ENCODE measurements at regions of chr21 and their contacts with region 1.

Region 1: GRCh38 chr21:28884976-28885852 is 107.5 kb downstream of the LTN1 start:
- DNase-seq: peak; percentile 73 to 91 (median 84)
- H3K4me3 ChIP-seq: peak overlapping the region; percentile 42 to 94 (median 77)
- H3K27ac ChIP-seq: peak overlapping the region; percentile 5 to 97 (median 89)
- H3K27me3 ChIP-seq: no peaks in the 10 kb centered on the region
- CTCF ChIP-seq: peak in 17 of 56 donors; percentile 3 to 54 (median 20)

Region 2: GRCh38 chr21:28928578-28929420 is 43.6 kb after region 1 on chr21:
- intact Hi-C with region 1: no loop called
- DNase-seq: no peak
- H3K4me3 ChIP-seq: no peak overlapping the region
- H3K27ac ChIP-seq: peak overlapping the region in 31 of 59 donors; percentile 1 to 56 (median 30)
- H3K27me3 ChIP-seq: no peaks in the 10 kb centered on the region
- CTCF ChIP-seq: no peak

Region 3: DNA sequence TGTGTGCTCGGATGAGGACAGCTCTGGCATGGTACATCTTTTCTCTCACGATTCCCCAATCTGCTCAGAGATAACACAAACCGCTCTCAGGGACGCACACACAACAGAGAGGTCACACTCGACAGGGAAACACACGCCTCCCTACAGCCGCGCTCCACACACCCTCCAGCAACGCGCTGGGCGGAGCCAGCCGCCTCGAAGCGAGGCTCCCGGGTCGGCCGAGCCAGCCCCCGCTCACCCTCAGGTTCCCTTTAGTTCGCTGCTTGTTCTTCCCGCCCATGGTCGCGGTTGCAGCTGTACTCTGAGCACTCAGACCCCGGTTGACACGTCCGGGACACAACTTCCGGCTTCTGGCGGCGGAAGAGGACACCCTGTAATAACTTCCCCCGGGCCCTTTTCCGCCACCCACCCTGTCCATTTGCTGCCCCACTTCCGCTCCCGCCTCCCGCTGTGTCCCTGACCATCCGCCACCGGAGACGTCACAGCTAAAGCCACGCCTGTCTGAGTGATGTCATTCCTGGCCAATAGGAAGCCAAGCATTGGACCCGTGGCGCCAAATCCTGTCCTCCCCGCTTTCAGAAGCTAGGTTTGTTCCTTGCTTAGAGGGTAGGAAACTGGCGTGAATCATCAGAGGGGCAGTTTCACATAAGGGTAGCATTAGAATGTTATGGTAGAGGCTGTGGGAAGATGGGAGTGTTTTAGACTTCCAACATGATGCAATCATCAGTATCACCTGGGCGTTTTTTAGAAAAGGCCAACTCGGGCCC is 107.5 kb after region 1 on chr21 and contains the start of gene LTN1:
- intact Hi-C with region 1: loop called in 1 of 2 experiments (anchors 10 kb)
- DNase-seq: peak; percentile 97 to 99 (median 99)
- H3K4me3 ChIP-seq: peak within 1 kb of the TSS; percentile 61 to 100 (median 93)
- H3K27ac ChIP-seq: peak within 1 kb of the TSS in 58 of 59 donors; percentile 30 to 96 (median 87)
- H3K27me3 ChIP-seq: no peaks in the 10 kb centered on the region
- CTCF ChIP-seq: peak in 17 of 56 donors; percentile 5 to 44 (median 23)
- total RNA-seq, gene LTN1: 20.9 to 41.3 (median 32.8) TPM